CD8-positive, alpha-beta T cell (primary cell): ENCODE measurements at regions of chr2 and their contacts with region 1.

Region 1: GRCh38 chr2:238320246-238320647 is at the start of gene TRAF3IP1:
- DNase-seq: peak; percentile 70 to 92 (median 84)
- ATAC-seq: peak; percentile 94
- H3K4me3 ChIP-seq: peak within 1 kb of the TSS; percentile 53 to 58
- H3K4me3 Mint-ChIP-seq: peak within 1 kb of the TSS; percentile 84
- H3K27ac ChIP-seq: no peak within 1 kb of the TSS
- H3K27ac Mint-ChIP-seq: peak within 1 kb of the TSS; percentile 22
- H3K4me1 ChIP-seq: peaks cover 19% of the 10 kb centered on the region
- H3K4me1 Mint-ChIP-seq: peaks cover 24% of the 10 kb centered on the region
- H3K27me3 ChIP-seq: no peaks in the 10 kb centered on the region
- H3K27me3 Mint-ChIP-seq: peaks cover 4% of the 10 kb centered on the region
- CTCF ChIP-seq: no peak
- total RNA-seq, gene TRAF3IP1: 6.1 to 8.6 TPM

Region 2: DNA sequence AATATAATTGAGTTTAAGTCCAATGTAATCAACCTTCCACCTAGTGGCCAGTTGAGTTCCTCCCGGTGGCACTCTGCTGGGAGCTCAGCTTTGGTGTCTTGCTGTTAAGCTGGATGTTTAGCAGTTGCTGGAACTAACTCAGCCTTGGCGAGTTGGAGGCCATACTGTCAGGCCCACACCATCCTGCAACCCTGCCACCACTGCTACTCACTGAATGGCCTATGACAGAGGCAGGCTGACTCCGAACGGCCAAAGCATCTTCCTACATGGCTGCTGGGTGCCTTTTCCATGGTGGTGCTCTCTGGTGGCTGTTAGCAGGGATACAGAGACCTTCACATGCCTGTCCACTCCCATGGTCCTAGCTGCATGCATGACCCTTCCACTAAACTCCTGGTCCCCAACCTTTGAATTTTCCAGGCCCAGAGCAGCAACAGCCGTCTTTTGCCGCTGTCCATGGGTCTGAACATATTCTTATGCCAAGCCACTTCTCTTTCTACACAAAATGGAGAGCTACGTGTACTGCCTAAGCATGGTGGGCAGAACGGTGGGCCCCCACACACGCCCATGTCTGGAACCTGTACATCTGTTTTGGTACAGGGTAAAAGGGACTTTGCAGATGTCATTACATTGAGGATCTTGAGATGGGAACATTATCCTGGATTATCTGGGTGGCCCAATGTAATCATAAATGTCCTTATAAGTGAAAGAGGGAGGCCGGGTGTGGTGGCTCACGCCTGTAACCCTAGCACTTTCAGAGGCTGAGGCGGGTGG is 15.0 kb before region 1 on chr2:
- CTCF ChIA-PET with region 1: no interaction called
- POLR2A ChIA-PET with region 1: no interaction called
- intact Hi-C with region 1: no loop called
- DNase-seq: no peak
- ATAC-seq: no peak
- H3K4me3 ChIP-seq: no peak overlapping the region
- H3K4me3 Mint-ChIP-seq: no peak overlapping the region
- H3K27ac ChIP-seq: no peak overlapping the region
- H3K27ac Mint-ChIP-seq: no peak overlapping the region
- H3K4me1 ChIP-seq: no peaks in the 10 kb centered on the region
- H3K4me1 Mint-ChIP-seq: no peaks in the 10 kb centered on the region
- H3K27me3 ChIP-seq: no peaks in the 10 kb centered on the region
- H3K27me3 Mint-ChIP-seq: peaks cover 5% of the 10 kb centered on the region
- CTCF ChIP-seq: no peak

Region 3: DNA sequence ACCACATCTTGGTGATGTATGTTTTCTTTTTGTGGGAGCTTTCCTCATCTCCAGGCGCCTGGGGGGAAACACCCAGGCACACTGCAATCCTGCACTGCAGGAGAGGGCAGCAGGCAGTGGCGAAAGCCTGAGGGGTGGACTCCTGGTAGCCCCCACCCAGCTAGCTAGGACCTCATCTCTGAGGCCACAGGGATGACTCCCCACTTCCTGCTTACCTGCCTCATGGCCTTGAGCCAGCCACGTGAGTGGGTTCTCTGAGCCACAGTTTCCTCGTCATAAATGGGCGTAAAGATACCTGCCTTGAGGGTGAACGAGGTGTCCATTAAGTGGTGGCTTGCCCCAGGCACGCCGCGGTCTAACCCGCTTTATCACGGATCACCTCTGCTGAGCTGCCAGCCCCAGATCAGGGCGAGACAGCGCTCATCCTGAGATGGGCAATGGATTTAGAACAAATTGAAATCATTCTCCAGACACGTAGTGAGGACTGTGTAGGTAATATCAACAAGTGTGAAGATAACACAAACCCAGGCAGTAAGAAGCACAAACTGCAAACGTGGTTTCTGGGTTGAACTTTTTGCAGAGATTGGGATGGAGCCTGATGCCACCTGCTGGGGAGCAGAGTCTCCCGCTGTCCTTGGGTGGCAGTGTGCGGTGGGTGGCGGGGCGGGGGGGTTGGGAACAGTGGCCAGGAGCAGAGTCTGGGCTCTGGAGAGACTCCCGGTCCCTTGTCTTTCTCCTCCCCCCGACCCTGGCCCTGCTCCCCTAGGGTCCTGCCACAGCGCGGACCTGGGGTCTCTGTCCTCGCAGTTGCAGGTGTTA is 19.4 kb after region 1 on chr2:
- CTCF ChIA-PET with region 1: no interaction called
- POLR2A ChIA-PET with region 1: no interaction called
- intact Hi-C with region 1: no loop called
- DNase-seq: peak in 1 of 9 experiments; percentile 28
- ATAC-seq: peak; percentile 31
- H3K4me3 ChIP-seq: no peak overlapping the region
- H3K4me3 Mint-ChIP-seq: no peak overlapping the region
- H3K27ac ChIP-seq: no peak overlapping the region
- H3K27ac Mint-ChIP-seq: no peak overlapping the region
- H3K4me1 ChIP-seq: peaks cover 5% of the 10 kb centered on the region
- H3K4me1 Mint-ChIP-seq: peaks cover 8% of the 10 kb centered on the region
- H3K27me3 ChIP-seq: no peaks in the 10 kb centered on the region
- H3K27me3 Mint-ChIP-seq: no peaks in the 10 kb centered on the region
- CTCF ChIP-seq: no peak

Region 4: GRCh38 chr2:238426568-238427434 is 106.6 kb after region 1 on chr2 and contains the start of gene ASB1:
- CTCF ChIA-PET with region 1: no interaction called
- POLR2A ChIA-PET with region 1: no interaction called
- intact Hi-C with region 1: loop called in 1 of 2 experiments (anchors 2 kb)
- DNase-seq: peak; percentile 62 to 94 (median 83)
- ATAC-seq: peak; percentile 78
- H3K4me3 ChIP-seq: peak within 1 kb of the TSS; percentile 66 to 79
- H3K4me3 Mint-ChIP-seq: peak within 1 kb of the TSS; percentile 92
- H3K27ac ChIP-seq: peak within 1 kb of the TSS; percentile 78 to 87
- H3K27ac Mint-ChIP-seq: peak within 1 kb of the TSS; percentile 97
- H3K4me1 ChIP-seq: peaks cover 37% of the 10 kb centered on the region
- H3K4me1 Mint-ChIP-seq: peaks cover 49% of the 10 kb centered on the region
- H3K27me3 ChIP-seq: no peaks in the 10 kb centered on the region
- H3K27me3 Mint-ChIP-seq: no peaks in the 10 kb centered on the region
- CTCF ChIP-seq: no peak
- total RNA-seq, gene ASB1: 16.3 to 25.3 TPM